Posterior vena cava (tissue), 2 donors: ENCODE measurements at regions of chr17 and their contacts with region 1.

Region 1: DNA sequence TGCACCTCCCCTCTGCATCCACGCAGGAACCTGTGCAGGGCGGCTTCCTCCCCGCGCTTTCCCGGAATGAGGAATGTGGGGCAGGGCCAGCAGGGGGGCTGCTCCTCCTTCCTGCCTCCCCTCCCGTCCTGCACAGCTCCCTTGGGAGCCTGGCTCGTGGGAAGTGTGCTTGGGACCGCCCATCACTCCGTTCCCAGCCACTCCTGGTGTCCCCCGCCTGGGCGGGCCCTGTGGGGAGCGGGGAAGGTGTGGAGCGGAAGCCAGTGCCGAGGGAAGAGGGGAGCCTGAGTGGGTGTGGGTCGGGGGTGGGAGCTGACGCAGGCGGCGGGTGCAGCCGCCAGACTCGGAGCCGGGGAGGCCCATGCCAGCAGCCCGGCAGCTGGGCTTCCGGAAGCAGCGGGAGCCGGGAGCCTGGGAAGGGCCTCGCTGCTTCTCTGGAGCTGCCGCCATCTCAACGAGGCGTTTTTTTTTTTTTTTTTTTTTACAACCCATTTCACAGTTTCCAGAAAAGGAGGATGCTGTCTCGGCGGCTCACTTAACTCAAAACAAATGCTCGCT is 24.1 kb downstream of the BAHCC1 start:
- DNase-seq: peak; percentile 98

Region 2: GRCh38 chr17:81238817-81239600 is 180.4 kb before region 1 on chr17 and contains the starts of genes NDUFAF8 and TEPSIN:
- intact Hi-C with region 1: no loop called
- DNase-seq: peak; percentile 98
- total RNA-seq, gene NDUFAF8: 27.8 to 33.7 TPM
- total RNA-seq, gene TEPSIN: 17.4 to 18.4 TPM

Region 3: DNA sequence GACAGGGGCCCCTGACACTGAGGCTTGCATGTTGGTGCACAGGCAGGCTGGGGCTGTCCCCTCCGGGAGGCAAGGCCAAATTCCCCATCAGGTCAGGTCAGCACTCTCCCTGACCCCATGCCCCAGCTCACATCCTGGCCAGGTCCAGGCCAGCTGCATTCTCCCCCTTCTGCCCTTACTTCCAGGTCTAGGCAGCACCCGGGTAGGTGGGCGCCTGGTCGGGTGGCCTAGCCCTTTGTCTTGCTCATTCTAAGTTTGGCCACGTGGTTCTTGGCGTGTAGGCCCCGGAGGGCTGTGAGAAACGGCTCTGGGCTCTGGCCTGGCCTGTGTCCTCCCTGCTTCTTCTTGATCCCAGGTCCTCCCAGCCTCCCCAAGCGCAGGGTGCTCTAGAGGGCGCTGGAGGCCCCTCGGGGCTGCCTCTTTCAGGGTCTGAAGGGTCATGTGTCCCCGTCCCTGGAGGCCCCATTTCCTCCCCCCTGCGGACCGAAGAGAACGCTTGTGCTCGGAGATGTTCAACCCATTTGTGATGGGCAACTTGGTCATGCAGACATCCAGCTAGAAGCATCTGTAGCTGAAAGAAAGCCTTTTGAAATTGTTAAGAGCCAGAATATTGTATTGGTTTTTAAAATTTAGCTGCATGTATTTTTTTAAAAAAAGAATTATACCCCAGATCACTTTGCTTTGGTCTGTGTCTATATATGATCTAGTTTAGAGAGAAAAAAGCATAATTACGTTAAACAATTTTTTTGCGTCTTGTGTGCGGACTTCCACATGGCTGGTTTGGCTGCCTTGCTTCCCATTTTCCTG is 17.5 kb before region 1 on chr17:
- intact Hi-C with region 1: loop called in 1 of 2 experiments (anchors 2 kb)
- DNase-seq: no peak

Region 4: DNA sequence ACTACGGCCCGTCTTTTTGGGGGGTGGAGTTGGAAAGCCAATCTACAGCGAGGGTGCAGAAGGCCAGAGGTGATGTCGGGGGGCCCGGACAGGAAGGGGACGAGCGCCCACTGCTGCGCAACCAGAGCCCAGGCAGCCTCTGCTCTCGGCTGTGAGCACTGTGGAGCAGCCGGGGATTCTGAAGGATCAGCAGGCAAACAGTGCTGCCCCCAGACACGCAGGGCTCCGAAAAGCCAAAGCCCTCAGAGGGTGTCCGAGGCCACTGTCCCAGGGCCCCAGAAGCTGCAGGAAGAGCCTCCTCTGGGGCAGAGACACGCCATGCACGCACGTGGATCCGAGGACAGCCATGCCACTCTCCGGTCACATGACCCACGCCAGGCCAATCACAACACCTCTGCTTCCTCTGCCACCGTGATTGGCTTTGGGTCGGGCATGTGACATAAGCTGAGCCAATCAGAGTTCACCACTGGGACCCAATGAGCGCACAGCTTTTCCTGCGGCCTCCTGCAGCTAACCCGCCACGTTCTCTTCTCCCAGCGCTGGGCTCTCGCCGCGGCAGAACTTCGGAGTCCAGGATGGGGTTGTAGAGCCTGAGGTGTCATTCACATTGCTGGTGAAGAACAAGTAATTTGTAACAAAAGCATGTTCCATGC is 52.5 kb after region 1 on chr17:
- intact Hi-C with region 1: no loop called
- DNase-seq: peak; percentile 93